HEK293 (cell line): ENCODE measurements at regions of chr2 and their contacts with region 1.

Region 1: DNA sequence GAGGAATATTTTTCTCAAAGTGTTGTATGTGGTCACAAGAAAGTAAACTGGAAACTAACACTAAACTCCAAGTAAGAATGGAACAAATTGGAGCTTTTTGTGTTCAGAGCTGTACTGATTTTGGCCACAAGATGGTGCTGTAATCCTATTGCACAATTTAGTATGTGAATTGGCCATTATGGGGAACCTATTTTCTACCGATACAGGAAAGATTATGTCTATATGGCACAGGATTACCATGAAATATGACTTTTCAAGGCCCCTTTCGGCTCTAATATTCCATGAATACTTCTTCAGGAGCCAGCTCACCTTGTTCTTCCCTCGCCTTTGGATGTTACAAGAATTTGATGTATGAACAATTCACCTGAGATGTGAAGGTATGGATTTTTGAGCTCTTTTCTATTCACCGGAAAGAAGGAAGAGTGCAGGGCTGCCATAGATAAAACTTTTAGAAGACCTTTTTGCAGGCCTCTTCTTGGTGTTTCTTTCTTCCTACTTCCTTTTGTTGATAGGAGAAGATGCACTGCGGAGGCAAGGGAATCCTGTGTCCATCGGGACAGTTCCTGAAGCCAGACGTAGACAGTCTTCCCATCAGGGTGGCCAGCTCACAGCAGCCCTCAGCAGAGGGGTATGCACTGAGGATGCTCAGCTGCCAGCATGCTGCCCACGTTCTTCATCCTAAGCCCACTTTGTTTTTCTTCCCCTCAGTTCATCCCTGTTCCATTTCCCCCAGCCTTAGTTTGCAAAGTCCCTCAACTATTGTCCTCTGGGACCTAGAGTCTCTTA is 13.3 kb downstream of the MRPL44 start:
- H3K4me3 ChIP-seq: no peak overlapping the region
- H3K27ac ChIP-seq: no peak overlapping the region
- H3K4me1 ChIP-seq: no peaks in the 10 kb centered on the region
- CTCF ChIP-seq: peak; percentile 63

Region 2: DNA sequence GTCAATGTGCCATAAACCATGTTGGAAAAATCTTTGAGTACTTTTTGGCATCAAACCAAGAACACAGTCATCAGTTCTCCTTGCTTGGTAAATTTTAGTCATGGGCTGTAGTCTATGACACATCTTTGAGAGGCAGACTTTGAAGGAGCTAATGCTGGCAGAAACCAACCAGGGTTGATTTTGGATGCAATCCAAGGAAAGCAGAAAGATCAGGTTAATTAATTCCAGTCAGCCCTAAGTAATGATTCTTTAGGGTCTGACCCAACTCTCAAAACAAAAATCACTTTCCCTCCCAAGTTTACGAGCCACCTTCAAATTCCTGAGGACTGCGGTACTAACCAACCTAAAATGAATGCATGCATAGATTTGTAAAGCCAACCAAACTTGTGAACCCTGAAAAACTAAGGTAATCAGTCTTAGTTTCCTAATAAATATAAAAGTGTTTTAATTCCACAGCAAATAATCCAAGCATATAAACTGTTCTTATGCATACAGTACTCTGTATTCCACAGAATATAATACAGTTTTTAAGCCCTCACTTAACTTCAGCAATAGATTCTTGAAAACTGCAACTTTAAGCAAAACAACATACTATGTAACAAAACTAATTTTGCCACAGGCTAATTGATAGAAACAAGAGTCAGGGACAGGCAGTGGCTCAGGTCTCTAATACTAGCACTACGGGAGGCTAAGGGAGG is 155.2 kb before region 1 on chr2:
- CTCF ChIA-PET with region 1: no interaction called
- POLR2A ChIA-PET with region 1: no interaction called
- H3K4me3 ChIP-seq: no peak overlapping the region
- H3K27ac ChIP-seq: peak overlapping the region; percentile 21; the same call in 1 of the 2 replicates
- H3K4me1 ChIP-seq: peaks cover 34% of the 10 kb centered on the region
- CTCF ChIP-seq: no peak

Region 3: GRCh38 chr2:223930103-223930976 is 40.2 kb before region 1 on chr2:
- CTCF ChIA-PET with region 1: no interaction called
- POLR2A ChIA-PET with region 1: no interaction called
- H3K4me3 ChIP-seq: no peak overlapping the region
- H3K27ac ChIP-seq: no peak overlapping the region; the same call in 1 of the 2 replicates
- H3K4me1 ChIP-seq: peaks cover 13% of the 10 kb centered on the region
- CTCF ChIP-seq: no peak

Region 4: DNA sequence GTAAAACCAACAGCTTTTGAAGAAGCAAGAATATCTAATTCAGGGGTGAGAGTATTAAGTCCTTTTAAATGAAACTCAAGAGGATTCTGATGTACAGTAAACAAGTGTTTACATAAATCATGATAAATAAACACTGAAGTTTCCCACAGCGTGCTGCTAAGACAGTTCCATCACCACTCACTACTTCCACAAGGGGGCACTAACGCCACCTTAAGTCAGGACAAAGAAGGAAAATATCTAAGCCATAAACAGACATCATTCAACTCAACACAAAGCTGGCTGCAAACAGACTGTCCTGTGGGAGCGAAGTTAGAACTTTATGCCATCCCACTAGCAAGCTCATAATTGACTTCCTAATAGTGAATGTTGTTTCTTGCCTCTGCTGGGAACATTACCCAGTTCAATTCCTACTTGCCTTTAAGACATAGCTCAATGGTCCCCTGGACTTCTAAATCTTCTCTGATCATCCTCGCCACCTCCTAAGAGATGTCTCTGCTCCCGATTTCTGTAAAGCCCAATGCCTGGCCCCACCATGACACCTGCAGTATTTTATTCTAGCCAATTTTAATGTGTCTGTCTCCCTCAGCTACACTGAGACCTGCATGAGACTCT is 23.2 kb after region 1 on chr2:
- CTCF ChIA-PET with region 1: interaction called, 43 read pairs
- POLR2A ChIA-PET with region 1: no interaction called
- H3K4me3 ChIP-seq: no peak overlapping the region
- H3K27ac ChIP-seq: no peak overlapping the region
- H3K4me1 ChIP-seq: no peaks in the 10 kb centered on the region
- CTCF ChIP-seq: peak; percentile 69

Region 5: GRCh38 chr2:224284134-224284946 is 313.8 kb after region 1 on chr2:
- CTCF ChIA-PET with region 1: interaction called, 149 read pairs
- POLR2A ChIA-PET with region 1: interaction called, 7 read pairs
- H3K4me3 ChIP-seq: no peak overlapping the region
- H3K27ac ChIP-seq: no peak overlapping the region
- H3K4me1 ChIP-seq: no peaks in the 10 kb centered on the region
- CTCF ChIP-seq: peak; percentile 77

Region 6: DNA sequence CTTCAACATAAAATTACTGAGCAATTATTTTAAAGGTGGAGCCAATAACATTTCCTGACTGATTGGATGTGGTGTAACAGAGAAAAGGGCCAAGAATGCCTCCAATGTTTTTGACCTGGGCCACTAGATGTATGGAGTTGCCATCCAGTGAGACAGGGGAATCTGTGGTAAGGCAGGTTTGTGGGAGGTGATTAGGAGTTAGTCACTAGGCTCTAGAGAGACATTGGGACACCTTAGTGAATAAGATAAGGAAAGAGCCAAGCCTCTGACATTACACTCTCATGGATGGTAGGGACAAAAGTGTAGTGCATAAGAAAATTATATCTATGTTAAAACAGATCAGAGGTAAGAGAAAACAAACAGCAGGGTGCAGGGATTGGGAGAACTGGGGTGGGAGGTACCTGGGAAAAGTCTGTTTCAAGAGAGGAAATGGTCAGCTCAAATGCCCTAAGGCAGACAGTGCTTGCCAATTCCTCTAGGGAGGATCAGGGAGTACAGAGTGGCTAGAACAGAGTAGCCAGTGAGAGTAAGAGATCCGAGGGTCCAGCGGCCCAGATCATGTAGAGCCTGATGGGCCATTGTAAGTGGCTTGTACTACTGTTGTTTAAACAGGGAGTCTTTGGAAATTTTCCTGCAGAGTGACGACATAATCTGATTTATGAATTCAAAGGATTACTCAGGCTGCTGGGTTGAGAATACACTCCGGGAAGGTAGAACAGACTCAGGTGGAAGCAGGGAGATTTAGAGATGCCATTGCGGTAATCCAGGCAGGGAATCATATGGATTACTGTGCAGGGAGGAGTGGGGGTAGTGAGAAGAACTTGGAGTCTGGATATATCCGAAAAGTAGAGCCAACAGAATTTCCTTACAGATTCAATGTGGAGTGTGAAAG is 660.4 kb after region 1 on chr2:
- CTCF ChIA-PET with region 1: interaction called, 10 read pairs
- POLR2A ChIA-PET with region 1: no interaction called
- H3K4me3 ChIP-seq: no peak overlapping the region
- H3K27ac ChIP-seq: no peak overlapping the region
- H3K4me1 ChIP-seq: peaks cover 2% of the 10 kb centered on the region; the same call in 1 of the 2 replicates
- CTCF ChIP-seq: no peak

Region 7: GRCh38 chr2:224778474-224778877 is 807.9 kb after region 1 on chr2:
- CTCF ChIA-PET with region 1: interaction called, 16 read pairs
- POLR2A ChIA-PET with region 1: no interaction called
- H3K4me3 ChIP-seq: no peak overlapping the region
- H3K27ac ChIP-seq: no peak overlapping the region
- H3K4me1 ChIP-seq: no peaks in the 10 kb centered on the region
- CTCF ChIP-seq: peak; percentile 35; the same call in 1 of the 2 replicates